PC-9 (cell line): ENCODE measurements at regions of chr6 and their contacts with region 1.

Region 1: GRCh38 chr6:48087448-48087847 is 23.5 kb downstream of the PTCHD4 start:
- DNase-seq: no peak
- H3K4me3 ChIP-seq: no peak overlapping the region
- H3K27ac ChIP-seq: no peak overlapping the region
- H3K4me1 ChIP-seq: no peaks in the 10 kb centered on the region
- H3K27me3 ChIP-seq: no peaks in the 10 kb centered on the region
- CTCF ChIP-seq: peak; percentile 63

Region 2: GRCh38 chr6:48318670-48319069 is 231.2 kb after region 1 on chr6:
- CTCF ChIA-PET with region 1: no interaction called
- POLR2A ChIA-PET with region 1: no interaction called
- intact Hi-C with region 1: loop called (anchors 10 kb)
- DNase-seq: no peak
- H3K4me3 ChIP-seq: no peak overlapping the region
- H3K27ac ChIP-seq: no peak overlapping the region
- H3K4me1 ChIP-seq: no peaks in the 10 kb centered on the region
- H3K27me3 ChIP-seq: no peaks in the 10 kb centered on the region
- CTCF ChIP-seq: no peak

Region 3: DNA sequence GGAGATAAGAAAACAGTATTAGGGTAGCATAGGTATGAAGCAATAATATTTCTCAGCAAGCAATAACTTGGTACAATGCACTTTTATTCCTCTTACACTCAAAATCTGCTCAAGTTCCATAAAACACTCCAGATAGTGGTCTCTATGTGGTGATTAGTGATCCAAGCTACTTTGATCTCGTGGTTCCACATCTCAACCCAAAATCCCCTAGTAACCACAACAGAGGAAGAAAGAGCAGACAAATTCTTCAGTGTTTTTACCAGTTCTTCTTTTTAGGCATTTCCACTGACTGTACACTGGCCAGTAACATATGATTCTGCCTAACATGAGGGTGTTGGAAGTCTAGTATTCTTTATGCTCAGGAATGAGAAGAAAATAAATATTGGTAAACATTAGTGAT is 332.5 kb after region 1 on chr6:
- CTCF ChIA-PET with region 1: no interaction called
- POLR2A ChIA-PET with region 1: no interaction called
- intact Hi-C with region 1: no loop called
- DNase-seq: no peak
- H3K4me3 ChIP-seq: no peak overlapping the region
- H3K27ac ChIP-seq: no peak overlapping the region
- H3K4me1 ChIP-seq: no peaks in the 10 kb centered on the region
- H3K27me3 ChIP-seq: no peaks in the 10 kb centered on the region
- CTCF ChIP-seq: no peak

Region 4: GRCh38 chr6:49409951-49410542 is 1322.6 kb after region 1 on chr6:
- CTCF ChIA-PET with region 1: no interaction called
- POLR2A ChIA-PET with region 1: no interaction called
- intact Hi-C with region 1: loop called (anchors 5 kb)
- DNase-seq: peak in 1 of 2 experiments; percentile 64
- H3K4me3 ChIP-seq: no peak overlapping the region
- H3K27ac ChIP-seq: no peak overlapping the region
- H3K4me1 ChIP-seq: peaks cover 5% of the 10 kb centered on the region; the same call in 1 of the 2 replicates
- H3K27me3 ChIP-seq: no peaks in the 10 kb centered on the region
- CTCF ChIP-seq: peak; percentile 93